Esophagus muscularis mucosa (tissue), 4 donors: ENCODE measurements at regions of chr11 and their contacts with region 1.

Region 1: GRCh38 chr11:74929431-74930363 is 19.2 kb downstream of the XRRA1 start:
- DNase-seq: no peak
- H3K4me3 ChIP-seq: no peak overlapping the region
- H3K27ac ChIP-seq: no peak overlapping the region
- H3K4me1 ChIP-seq: no peaks in the 10 kb centered on the region
- H3K27me3 ChIP-seq: no peaks in the 10 kb centered on the region
- CTCF ChIP-seq: peak; percentile 79 to 85 (median 84)
- EP300 ChIP-seq: no peak
- POLR2A ChIP-seq: no peak

Region 2: DNA sequence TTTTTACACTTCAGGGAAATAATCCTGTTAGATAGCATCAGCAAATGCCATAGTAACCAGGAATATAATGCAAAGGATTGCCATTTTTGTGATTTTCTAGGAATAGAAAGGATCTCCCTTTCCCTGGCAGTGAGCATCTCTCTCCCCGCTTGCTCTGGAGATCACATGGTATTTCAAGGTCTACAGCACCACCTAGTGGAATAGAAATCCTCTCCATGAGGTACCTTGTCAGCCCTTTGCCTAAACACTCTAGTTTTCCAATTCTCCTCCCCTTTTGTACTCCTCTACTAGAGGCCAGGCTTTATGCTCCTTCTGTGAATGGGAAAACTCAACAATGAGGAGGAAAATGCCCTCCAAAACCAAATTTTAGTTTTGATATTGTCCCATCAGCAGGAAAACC is 59.2 kb before region 1 on chr11:
- intact Hi-C with region 1: no loop called
- DNase-seq: no peak
- H3K4me3 ChIP-seq: no peak overlapping the region
- H3K27ac ChIP-seq: no peak overlapping the region
- H3K4me1 ChIP-seq: no peaks in the 10 kb centered on the region
- H3K27me3 ChIP-seq: no peaks in the 10 kb centered on the region
- CTCF ChIP-seq: peak in 1 of 3 experiments; percentile 7
- EP300 ChIP-seq: no peak
- POLR2A ChIP-seq: no peak

Region 3: GRCh38 chr11:75031771-75032549 is 102.3 kb after region 1 on chr11:
- intact Hi-C with region 1: loop called (anchors 5 kb)
- DNase-seq: peak; percentile 92
- H3K4me3 ChIP-seq: no peak overlapping the region
- H3K27ac ChIP-seq: no peak overlapping the region
- H3K4me1 ChIP-seq: no peaks in the 10 kb centered on the region
- H3K27me3 ChIP-seq: no peaks in the 10 kb centered on the region
- CTCF ChIP-seq: peak; percentile 56 to 70 (median 60)
- EP300 ChIP-seq: no peak
- POLR2A ChIP-seq: no peak

Region 4: GRCh38 chr11:75204685-75205563 is 275.2 kb after region 1 on chr11:
- intact Hi-C with region 1: no loop called
- DNase-seq: peak; percentile 95
- H3K4me3 ChIP-seq: no peak overlapping the region
- H3K27ac ChIP-seq: no peak overlapping the region
- H3K4me1 ChIP-seq: peaks cover 0 to 6% (median 0%) of the 10 kb centered on the region in 4 donors
- H3K27me3 ChIP-seq: peaks cover 0 to 14% (median 0%) of the 10 kb centered on the region in 4 donors
- CTCF ChIP-seq: peak; percentile 79 to 84 (median 83)
- EP300 ChIP-seq: no peak
- POLR2A ChIP-seq: no peak

Region 5: DNA sequence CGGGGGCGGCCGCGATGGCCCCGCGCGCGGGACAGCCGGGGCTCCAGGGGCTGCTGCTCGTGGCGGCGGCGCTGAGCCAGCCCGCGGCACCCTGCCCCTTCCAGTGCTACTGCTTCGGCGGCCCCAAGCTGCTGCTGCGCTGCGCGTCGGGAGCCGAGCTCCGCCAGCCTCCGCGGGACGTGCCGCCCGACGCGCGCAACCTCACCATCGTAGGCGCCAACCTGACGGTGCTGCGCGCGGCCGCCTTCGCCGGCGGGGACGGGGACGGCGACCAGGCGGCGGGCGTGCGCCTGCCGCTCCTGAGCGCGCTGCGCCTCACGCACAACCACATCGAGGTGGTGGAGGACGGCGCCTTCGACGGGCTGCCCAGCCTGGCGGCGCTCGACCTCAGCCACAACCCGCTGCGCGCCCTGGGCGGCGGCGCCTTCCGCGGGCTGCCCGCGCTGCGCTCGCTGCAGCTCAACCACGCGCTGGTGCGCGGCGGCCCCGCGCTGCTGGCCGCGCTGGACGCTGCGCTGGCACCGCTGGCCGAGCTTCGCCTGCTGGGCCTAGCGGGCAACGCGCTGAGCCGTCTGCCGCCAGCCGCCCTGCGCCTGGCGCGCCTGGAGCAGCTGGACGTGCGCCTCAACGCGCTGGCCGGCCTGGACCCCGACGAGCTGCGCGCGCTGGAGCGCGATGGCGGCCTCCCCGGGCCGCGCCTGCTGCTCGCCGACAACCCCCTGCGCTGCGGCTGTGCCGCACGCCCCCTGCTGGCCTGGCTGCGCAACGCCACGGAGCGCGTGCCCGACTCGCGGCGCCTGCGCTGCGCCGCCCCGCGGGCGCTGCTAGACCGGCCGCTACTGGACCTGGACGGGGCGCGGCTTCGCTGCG is 311.6 kb after region 1 on chr11:
- intact Hi-C with region 1: loop called (anchors 5 kb)
- DNase-seq: no peak
- H3K4me3 ChIP-seq: peak overlapping the region; percentile 45 to 56 (median 50)
- H3K27ac ChIP-seq: no peak overlapping the region
- H3K4me1 ChIP-seq: peaks cover 6 to 26% (median 21%) of the 10 kb centered on the region in 4 donors
- H3K27me3 ChIP-seq: peaks cover 8 to 85% (median 31%) of the 10 kb centered on the region in 4 donors
- CTCF ChIP-seq: peak; percentile 91 to 96 (median 95)
- EP300 ChIP-seq: no peak
- POLR2A ChIP-seq: no peak